ENCODE measurements at regions of chr10 and their contacts with region 1.

Region 1: GRCh38 chr10:102729029-102730026 is 14.4 kb upstream of the WBP1L start:
- DNase-seq: peak; percentile 90
- H3K4me3 ChIP-seq: no peak overlapping the region
- H3K27ac ChIP-seq: no peak overlapping the region
- H3K4me1 ChIP-seq: 0 out of 2 replicates have a peak, but pooled peaks cover 4% of the 10 kb centered on the region
- H3K27me3 ChIP-seq: no peaks in the 10 kb centered on the region

Region 2: GRCh38 chr10:102831322-102832071 is 102.2 kb after region 1 on chr10:
- in situ Hi-C with region 1: loop called (anchors 5 kb)
- DNase-seq: peak; percentile 67
- H3K4me3 ChIP-seq: no peak overlapping the region
- H3K27ac ChIP-seq: no peak overlapping the region
- H3K4me1 ChIP-seq: no peaks in the 10 kb centered on the region
- H3K27me3 ChIP-seq: no peaks in the 10 kb centered on the region